ENCODE measurements at regions of chr19 and their contacts with region 1.

Region 1: GRCh38 chr19:11558881-11559828 is at the start of gene ELOF1:
- DNase-seq: peak; percentile 99
- H3K4me3 ChIP-seq: peak within 1 kb of the TSS; percentile 64 to 89 (median 74)
- H3K27ac ChIP-seq: peak within 1 kb of the TSS; percentile 82 to 86 (median 84)
- H3K4me1 ChIP-seq: peaks cover 0 to 41% (median 32%) of the 10 kb centered on the region in 4 donors
- H3K27me3 ChIP-seq: no peaks in the 10 kb centered on the region
- CTCF ChIP-seq: peak in 2 of 4 experiments; percentile 18 to 35
- EP300 ChIP-seq: peak in 2 of 4 donors; percentile 14 to 24
- POLR2A ChIP-seq: peak; percentile 86 to 88
- total RNA-seq, gene ELOF1: 27.2 to 47.9 (median 38.9) TPM

Region 2: GRCh38 chr19:11505032-11505503 is 54.1 kb before region 1 on chr19:
- intact Hi-C with region 1: loop called (anchors 2 kb)
- DNase-seq: peak; percentile 99
- H3K4me3 ChIP-seq: peak overlapping the region; percentile 82 to 98 (median 90)
- H3K27ac ChIP-seq: peak overlapping the region; percentile 92 to 98 (median 98)
- H3K4me1 ChIP-seq: peaks cover 0 to 20% (median 11%) of the 10 kb centered on the region in 4 donors
- H3K27me3 ChIP-seq: no peaks in the 10 kb centered on the region
- CTCF ChIP-seq: no peak
- EP300 ChIP-seq: no peak
- POLR2A ChIP-seq: peak in 1 of 2 donors; percentile 11

Region 3: GRCh38 chr19:11528551-11529341 is 30.4 kb before region 1 on chr19 and contains the start of gene ECSIT:
- intact Hi-C with region 1: loop called (anchors 5 kb)
- DNase-seq: peak; percentile 99
- H3K4me3 ChIP-seq: peak within 1 kb of the TSS; percentile 67 to 92 (median 82)
- H3K27ac ChIP-seq: peak within 1 kb of the TSS; percentile 83 to 95 (median 92)
- H3K4me1 ChIP-seq: peaks cover 0 to 36% (median 27%) of the 10 kb centered on the region in 4 donors
- H3K27me3 ChIP-seq: no peaks in the 10 kb centered on the region
- CTCF ChIP-seq: no peak
- EP300 ChIP-seq: no peak
- POLR2A ChIP-seq: peak in 1 of 2 donors; percentile 17
- total RNA-seq, gene ECSIT: 74.5 to 93.5 (median 82.4) TPM

Region 4: DNA sequence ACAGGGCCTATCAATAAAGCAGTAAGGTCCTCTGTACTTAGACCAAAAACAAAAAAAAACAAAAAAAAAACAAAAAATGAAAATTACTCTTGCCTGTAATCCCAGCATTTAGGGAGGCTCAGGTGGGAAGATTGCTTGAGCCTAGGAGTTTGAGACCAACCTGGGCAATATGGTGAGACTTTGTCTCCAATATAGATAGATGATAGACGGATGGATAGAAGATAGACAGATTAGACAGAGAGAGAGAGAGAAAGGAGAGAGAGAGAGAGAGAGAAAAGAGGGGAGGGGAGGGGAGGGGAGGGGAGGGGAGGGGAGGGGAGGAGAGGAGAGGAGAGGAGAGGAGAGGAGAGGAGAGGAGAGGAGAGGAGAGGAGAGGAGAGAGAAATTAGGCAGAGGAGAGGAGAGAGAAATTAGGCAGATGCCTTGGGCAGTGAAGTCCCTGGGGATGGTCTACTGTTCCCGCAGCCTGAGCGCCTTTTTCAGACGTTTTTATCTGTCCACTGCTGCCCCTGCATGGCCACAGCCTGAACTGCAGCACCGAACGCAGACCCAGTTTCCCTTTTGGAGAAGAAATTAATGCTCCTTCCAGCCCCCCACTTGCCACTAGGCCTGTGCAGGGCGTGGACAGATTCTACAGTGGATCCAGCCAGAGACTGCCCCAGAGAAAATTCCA is 28.3 kb after region 1 on chr19:
- intact Hi-C with region 1: loop called (anchors 2 kb)
- DNase-seq: peak; percentile 86
- H3K4me3 ChIP-seq: no peak overlapping the region
- H3K27ac ChIP-seq: peak overlapping the region in 1 of 4 donors; percentile 2
- H3K4me1 ChIP-seq: no peaks in the 10 kb centered on the region
- H3K27me3 ChIP-seq: no peaks in the 10 kb centered on the region
- CTCF ChIP-seq: peak; percentile 83 to 91 (median 88)
- EP300 ChIP-seq: no peak
- POLR2A ChIP-seq: no peak